Lower leg skin (tissue), 4 donors: ENCODE measurements at regions of chr10 and their contacts with region 1.

Region 1: DNA sequence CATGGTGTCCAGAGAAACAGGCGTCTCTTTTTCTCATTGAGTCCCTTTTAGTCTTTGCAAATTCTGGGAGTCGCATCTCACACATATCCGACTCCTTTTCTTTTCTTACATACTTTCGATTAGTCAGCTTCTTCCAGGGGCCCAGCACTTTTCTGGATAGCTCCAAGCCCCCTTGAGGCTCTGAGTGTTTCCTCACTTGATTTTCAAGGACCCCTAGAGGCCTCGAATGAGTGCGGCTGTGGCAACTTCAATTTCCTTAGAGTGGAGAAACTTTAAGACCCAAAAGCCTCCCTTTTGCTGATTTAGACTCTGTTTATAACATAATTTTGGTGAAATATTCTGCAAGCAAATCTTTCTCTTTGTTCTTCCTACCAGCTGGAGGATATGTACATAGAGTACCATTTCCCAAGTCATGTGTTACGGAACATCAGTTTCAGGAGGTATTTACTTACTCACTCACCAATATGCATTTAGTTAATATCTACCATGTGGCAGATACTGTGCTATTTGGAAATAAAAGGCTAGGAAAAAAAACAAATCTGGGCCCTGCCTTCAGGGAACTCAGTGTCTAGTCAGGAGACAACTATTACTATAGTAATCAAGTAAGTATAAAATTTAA is 555.2 kb downstream of the REEP3 start:
- DNase-seq: no peak
- H3K4me3 ChIP-seq: no peak overlapping the region
- CTCF ChIP-seq: no peak
- POLR2A ChIP-seq: no peak

Region 2: DNA sequence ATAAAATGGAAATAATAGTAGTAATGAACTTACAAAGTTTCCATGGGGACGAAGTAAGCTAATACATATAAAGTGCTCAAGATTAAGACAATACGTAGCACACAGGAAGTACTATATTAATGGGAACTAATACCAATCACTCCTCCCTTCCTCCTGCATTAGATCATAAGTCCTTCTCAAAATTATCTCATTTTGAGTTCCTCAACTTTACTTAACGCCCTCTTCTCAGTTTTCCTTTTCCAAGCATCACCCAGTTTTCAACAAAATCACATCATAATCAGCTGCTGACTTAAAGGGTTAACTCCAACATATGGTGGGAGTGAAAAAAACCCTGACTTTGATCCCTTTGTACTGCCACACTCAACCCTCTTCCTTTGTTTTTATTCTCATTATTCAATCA is 635.0 kb before region 1 on chr10:
- intact Hi-C with region 1: loop called (anchors 5 kb)
- DNase-seq: no peak
- H3K4me3 ChIP-seq: no peak overlapping the region
- CTCF ChIP-seq: no peak
- POLR2A ChIP-seq: no peak

Region 3: GRCh38 chr10:63547628-63548360 is 528.6 kb before region 1 on chr10:
- intact Hi-C with region 1: no loop called
- DNase-seq: no peak
- H3K4me3 ChIP-seq: no peak overlapping the region
- CTCF ChIP-seq: no peak
- POLR2A ChIP-seq: no peak

Region 4: GRCh38 chr10:64007157-64007556 is 69.3 kb before region 1 on chr10:
- intact Hi-C with region 1: no loop called
- DNase-seq: no peak
- H3K4me3 ChIP-seq: no peak overlapping the region
- CTCF ChIP-seq: no peak
- POLR2A ChIP-seq: no peak

Region 5: DNA sequence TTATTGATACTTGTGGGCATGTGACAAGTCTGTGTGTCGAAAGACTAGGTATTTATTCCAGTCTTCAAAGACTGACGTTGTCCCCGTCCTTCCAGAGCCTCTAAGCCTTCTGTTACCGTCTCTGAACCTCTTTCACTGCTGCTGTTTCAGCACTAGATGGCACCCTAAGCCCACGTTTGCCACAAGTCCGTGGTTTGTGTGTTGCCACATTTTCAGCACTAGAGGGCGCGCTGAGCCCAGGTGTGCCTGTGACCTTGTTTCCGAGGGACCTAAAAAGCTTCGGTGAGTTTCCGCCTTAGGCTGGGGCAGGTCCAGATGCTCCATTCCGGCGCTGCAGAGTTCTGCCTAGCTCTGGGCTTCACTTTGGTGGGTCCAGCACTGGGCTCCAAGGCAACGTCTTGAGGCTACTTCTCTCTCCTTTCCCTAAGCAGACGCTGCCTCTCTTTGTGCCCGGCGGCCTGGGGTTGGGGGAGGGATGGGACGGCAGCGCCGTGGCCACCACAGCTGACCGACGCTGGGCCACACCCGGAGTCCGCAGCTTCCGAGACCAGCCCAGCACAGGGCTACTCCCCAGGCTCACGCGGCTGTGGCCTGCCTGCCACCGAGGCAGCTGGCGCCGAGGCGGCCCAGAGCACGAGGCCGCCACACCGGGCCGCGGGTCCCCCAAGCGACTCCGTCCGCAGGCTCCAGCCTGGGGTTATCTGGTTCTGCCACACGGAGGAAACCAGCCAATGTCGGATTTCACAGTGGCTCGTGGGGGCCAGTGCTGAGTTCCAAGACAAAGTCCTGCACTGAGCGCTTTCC is 35.0 kb before region 1 on chr10:
- intact Hi-C with region 1: no loop called
- DNase-seq: peak; percentile 49 to 92
- H3K4me3 ChIP-seq: no peak overlapping the region
- CTCF ChIP-seq: peak in 1 of 3 donors; percentile 95
- POLR2A ChIP-seq: no peak